ENCODE measurements at regions of chr2 and their contacts with region 1.

Region 1: DNA sequence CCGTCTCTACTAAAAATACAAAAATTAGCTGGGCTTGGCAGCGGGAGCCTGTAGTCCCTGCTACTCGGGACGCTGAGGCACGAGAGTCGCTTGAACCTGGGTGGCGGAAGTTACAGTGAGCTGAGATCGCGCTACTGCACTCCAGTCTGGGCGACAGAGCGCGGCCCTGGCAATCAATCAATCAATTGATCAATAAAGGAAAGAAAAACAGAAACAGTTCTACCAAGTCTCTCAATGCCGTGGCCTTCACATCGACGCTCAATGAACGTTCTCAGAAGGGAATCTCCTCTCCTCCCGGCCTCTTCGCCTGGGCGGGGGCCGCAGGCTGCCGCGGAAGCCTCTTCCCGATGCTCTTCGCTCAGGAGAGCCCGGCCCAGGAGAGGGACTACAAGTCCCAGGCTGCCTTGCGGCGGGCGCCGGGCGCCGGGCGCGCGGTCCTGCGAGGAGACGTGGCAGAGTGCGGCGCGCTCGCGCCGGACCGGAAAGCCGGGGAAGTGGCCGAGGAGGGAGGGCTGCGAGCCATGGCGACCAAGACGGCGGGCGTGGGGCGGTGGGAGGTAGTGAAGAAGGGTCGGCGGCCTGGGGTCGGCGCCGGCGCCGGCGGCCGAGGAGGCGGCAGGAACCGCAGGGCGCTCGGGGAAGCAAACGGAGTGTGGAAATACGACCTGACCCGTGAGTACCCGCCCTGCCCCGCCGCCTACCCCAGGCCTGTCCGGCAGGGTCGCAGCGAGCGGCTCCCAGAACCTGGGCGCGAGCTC is at the start of gene TMEM214:
- DNase-seq: peak; percentile 87
- H3K4me3 ChIP-seq: peak within 1 kb of the TSS; percentile 76 to 91 (median 79)
- H3K27ac ChIP-seq: peak within 1 kb of the TSS; percentile 58
- H3K4me1 ChIP-seq: peaks cover 13% of the 10 kb centered on the region
- H3K27me3 ChIP-seq: no peaks in the 10 kb centered on the region
- CTCF ChIP-seq: no peak
- POLR2A ChIP-seq: peak; percentile 80
- total RNA-seq, gene TMEM214: 107 and 109 TPM in 2 replicates

Region 2: DNA sequence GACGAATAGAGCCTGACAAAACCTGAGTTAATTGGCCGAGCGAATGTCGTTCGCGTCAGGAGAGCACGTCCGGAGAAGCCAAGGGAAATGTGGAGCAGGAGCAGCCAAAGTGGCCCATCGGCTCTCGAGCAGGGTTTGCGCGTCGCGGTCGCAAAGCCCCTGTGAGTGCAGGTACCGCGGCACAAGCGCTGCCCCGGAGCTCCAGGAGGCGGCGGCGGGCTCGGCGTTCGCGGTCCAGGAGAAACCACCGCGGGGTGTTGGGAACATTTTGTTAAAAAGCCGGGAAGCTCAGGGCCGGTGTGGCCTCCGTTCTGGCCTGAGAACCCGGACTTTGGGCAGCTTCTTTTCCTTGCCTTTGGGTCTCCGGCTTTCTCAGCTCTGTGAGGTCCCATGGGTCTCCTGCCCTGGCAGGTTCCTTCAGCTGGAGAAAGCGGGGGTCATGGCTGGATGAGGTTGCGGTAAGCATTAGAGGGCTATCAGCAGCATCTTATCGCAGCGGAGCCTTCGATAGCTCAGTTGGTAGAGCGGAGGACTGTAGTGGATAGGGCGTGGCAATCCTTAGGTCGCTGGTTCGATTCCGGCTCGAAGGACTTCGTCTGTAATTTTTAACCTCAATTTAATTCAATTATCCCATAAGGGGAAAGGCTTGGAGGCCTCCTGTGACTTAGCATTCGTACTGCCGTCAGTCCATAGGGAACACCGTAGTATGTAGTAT is 17.8 kb after region 1 on chr2:
- CTCF ChIA-PET with region 1: interaction called, 14 read pairs
- POLR2A ChIA-PET with region 1: interaction called, 4 read pairs
- dilution Hi-C with region 1: no loop called
- intact Hi-C with region 1: loop called (anchors 1 kb)
- DNase-seq: peak; percentile 98
- H3K4me3 ChIP-seq: peak overlapping the region; percentile 66 to 76 (median 73)
- H3K27ac ChIP-seq: peak overlapping the region; percentile 60
- H3K4me1 ChIP-seq: peaks cover 12% of the 10 kb centered on the region
- H3K27me3 ChIP-seq: no peaks in the 10 kb centered on the region
- CTCF ChIP-seq: peak; percentile 18 to 52
- POLR2A ChIP-seq: peak; percentile 96

Region 3: DNA sequence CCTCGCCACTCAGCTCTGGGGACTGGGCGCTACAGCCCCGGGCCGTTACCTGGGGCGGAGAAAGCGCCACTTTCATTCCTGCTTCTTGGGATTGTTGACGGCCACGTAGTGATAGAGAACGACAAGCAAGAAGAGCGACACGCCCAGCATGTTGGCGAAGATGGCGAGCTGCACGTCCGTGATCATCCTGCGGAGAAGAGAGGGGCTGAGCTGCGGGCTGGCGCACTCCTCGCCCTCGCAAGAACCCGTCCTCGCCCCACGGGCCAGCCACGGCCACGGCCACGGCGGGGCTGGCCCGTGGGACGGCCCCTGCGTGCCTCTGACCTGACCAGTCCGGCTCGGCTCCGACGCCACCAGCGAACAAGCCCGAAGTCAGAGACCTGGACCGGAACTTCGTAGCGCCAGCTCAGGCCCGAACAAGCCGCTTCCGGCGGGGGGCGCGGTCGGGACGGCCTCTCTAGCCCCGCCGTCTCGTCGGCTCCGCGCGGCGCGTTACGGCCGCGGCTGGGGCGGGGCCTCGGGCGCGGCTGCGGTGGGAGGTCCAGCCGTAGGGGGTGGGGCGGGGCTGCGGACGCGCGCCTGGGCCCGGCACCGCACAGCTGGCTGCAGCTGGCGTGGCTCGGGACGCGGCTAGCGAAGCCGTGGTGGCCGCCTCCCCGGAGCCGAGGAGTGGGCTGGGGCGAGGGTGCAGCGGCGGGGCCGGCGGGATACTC is 38.8 kb after region 1 on chr2 and contains the start of gene OST4:
- CTCF ChIA-PET with region 1: no interaction called
- POLR2A ChIA-PET with region 1: no interaction called
- dilution Hi-C with region 1: no loop called
- intact Hi-C with region 1: loop called (anchors 1 kb)
- DNase-seq: peak; percentile 92
- H3K4me3 ChIP-seq: peak within 1 kb of the TSS; percentile 41 to 85 (median 68)
- H3K27ac ChIP-seq: peak within 1 kb of the TSS; percentile 76
- H3K4me1 ChIP-seq: peaks cover 17% of the 10 kb centered on the region
- H3K27me3 ChIP-seq: no peaks in the 10 kb centered on the region
- CTCF ChIP-seq: no peak
- POLR2A ChIP-seq: peak; percentile 93
- total RNA-seq, gene OST4: 415 TPM in 2 replicates

Region 4: GRCh38 chr2:27663463-27664249 is 631.0 kb after region 1 on chr2 and contains the starts of genes SLC4A1AP and SUPT7L:
- CTCF ChIA-PET with region 1: no interaction called
- POLR2A ChIA-PET with region 1: no interaction called
- dilution Hi-C with region 1: no loop called
- intact Hi-C with region 1: no loop called
- DNase-seq: peak; percentile 92
- H3K4me3 ChIP-seq: peak within 1 kb of the TSS; percentile 71 to 98 (median 84)
- H3K27ac ChIP-seq: peak within 1 kb of the TSS; percentile 73
- H3K4me1 ChIP-seq: peaks cover 37% of the 10 kb centered on the region
- H3K27me3 ChIP-seq: no peaks in the 10 kb centered on the region
- CTCF ChIP-seq: no peak
- POLR2A ChIP-seq: peak; percentile 67
- total RNA-seq, gene SLC4A1AP: 26.2 and 28.4 TPM in 2 replicates
- total RNA-seq, gene SUPT7L: 30.2 and 30.3 TPM in 2 replicates

Measured in endothelial cell of umbilical vein (primary cell).